Mammary epithelial cell (primary cell): ENCODE measurements at regions of chr22 and their contacts with region 1.

Region 1: GRCh38 chr22:30169002-30169401 is 77.6 kb downstream of the LIF start:
- DNase-seq: no peak
- H3K4me3 ChIP-seq: no peak overlapping the region
- H3K27ac ChIP-seq: no peak overlapping the region
- H3K4me1 ChIP-seq: no peaks in the 10 kb centered on the region
- H3K27me3 ChIP-seq: no peaks in the 10 kb centered on the region
- CTCF ChIP-seq: no peak

Region 2: DNA sequence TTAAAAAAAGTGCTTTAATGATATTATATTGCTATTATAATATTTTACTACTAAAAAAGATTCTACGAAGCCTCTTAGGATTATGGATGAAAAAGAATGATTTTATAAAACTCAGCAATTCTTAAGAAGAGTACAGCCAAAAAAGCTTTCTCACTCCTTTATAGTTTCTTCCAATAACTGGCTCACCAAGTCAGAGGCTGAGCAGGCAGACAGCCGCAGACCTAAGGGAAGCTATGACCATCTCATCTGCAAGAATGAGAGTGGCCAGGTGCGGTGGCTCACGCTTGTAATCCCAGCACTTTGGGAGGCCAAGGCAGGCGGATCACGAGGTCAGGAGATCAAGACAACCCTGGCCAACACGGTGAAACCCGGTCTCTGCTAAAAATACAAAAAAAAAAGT is 976.0 kb before region 1 on chr22:
- CTCF ChIA-PET with region 1: interaction called, 15 read pairs
- dilution Hi-C with region 1: no loop called
- in situ Hi-C with region 1: no loop called
- intact Hi-C with region 1: no loop called
- DNase-seq: no peak
- H3K4me3 ChIP-seq: no peak overlapping the region
- H3K27ac ChIP-seq: no peak overlapping the region
- H3K4me1 ChIP-seq: no peaks in the 10 kb centered on the region
- H3K27me3 ChIP-seq: no peaks in the 10 kb centered on the region
- CTCF ChIP-seq: no peak

Region 3: GRCh38 chr22:29979777-29980321 is 189.2 kb before region 1 on chr22:
- CTCF ChIA-PET with region 1: no interaction called
- dilution Hi-C with region 1: no loop called
- in situ Hi-C with region 1: no loop called
- intact Hi-C with region 1: no loop called
- DNase-seq: no peak
- H3K4me3 ChIP-seq: no peak overlapping the region
- H3K27ac ChIP-seq: no peak overlapping the region
- H3K4me1 ChIP-seq: peaks cover 11% of the 10 kb centered on the region
- H3K27me3 ChIP-seq: no peaks in the 10 kb centered on the region
- CTCF ChIP-seq: no peak

Region 4: GRCh38 chr22:30127749-30128166 is 41.2 kb before region 1 on chr22:
- CTCF ChIA-PET with region 1: no interaction called
- dilution Hi-C with region 1: no loop called
- in situ Hi-C with region 1: no loop called
- intact Hi-C with region 1: no loop called
- DNase-seq: no peak
- H3K4me3 ChIP-seq: no peak overlapping the region
- H3K27ac ChIP-seq: no peak overlapping the region
- H3K4me1 ChIP-seq: no peaks in the 10 kb centered on the region
- H3K27me3 ChIP-seq: no peaks in the 10 kb centered on the region
- CTCF ChIP-seq: no peak

Region 5: DNA sequence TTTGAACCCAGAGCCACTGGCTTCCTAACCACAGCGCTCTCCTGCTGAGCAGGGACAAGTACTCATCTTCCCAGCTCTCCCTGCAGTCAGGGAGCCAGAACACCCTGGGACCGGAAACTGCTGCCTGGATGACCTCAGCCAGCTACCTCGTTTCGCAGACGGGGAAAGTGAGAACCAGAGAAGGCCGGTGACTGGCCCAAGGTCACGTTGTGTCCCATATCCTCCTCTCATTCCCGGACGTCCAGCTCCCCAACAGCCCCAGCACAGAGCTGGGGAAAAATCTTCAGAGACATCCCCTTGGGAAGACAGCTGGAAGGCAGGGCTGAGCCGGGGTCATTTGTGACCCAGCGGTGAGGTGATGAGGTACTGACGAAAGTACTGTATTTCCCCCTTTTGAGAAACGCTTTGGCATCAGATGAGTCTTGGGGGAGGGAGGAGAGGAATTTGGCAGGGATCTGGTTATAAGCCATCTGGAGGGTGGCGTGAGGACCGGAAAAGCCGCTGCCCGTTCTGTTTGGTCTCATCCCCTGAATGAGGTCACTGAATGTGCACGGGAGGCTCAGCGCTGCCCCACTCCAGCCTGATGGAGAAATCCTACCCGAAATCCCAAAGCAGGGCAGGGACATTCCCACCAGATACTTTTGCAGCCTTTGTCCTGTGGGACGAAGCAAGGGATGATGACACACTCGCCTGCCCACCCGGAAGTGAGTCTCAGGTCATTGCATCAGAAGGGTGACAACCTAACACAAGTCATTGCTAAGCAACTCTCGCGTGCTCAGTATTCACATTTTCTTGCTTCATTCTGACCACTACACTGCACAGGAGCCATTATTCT is 36.5 kb after region 1 on chr22:
- CTCF ChIA-PET with region 1: no interaction called
- dilution Hi-C with region 1: loop called (anchors 5 kb)
- in situ Hi-C with region 1: no loop called
- intact Hi-C with region 1: no loop called
- DNase-seq: peak; percentile 99
- H3K4me3 ChIP-seq: no peak overlapping the region
- H3K27ac ChIP-seq: peak overlapping the region; percentile 97
- H3K4me1 ChIP-seq: peaks cover 60% of the 10 kb centered on the region
- H3K27me3 ChIP-seq: no peaks in the 10 kb centered on the region
- CTCF ChIP-seq: no peak

Region 6: DNA sequence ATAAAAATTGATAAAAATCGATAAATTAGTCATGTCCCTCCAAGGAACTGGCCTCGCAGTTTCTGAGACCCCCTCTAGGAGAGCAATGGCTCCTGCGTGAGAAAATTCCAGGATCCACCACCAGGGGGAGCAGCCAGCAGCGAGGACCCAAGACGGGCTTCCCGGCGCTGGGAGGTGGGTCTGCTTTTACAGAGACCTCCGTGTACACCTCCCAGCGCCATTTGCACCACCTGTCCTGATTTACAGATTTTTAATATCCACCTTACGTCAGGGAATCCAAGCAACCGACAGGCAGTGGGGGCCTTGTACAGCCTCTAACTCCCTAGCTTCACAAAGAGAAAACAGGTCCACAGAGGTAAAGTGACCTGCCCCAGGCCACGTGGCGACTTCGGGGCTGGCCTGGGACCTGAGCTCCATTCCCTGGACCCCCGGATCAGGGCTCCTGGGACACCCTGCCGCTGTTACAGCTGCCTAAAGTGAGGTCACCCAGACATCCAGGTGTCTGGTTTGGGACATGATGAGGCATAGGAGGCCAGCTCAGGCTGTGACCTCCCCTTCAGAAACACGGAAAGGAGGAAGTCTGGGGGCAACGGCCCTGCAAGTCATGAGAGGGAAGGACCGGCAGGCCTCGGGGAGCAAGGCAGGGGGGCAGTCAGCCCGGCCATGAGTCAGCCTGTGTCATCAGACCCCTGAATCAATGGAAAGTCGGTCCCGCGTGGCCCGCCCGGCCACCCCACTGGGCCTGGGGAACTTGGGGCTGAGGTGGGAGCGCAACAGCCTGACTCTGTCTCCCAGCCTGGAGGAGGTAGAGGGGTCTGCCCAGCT is 94.1 kb after region 1 on chr22:
- CTCF ChIA-PET with region 1: no interaction called
- dilution Hi-C with region 1: loop called (anchors 5 kb)
- in situ Hi-C with region 1: no loop called
- intact Hi-C with region 1: no loop called
- DNase-seq: no peak
- H3K4me3 ChIP-seq: no peak overlapping the region
- H3K27ac ChIP-seq: peak overlapping the region; percentile 62
- H3K4me1 ChIP-seq: peaks cover 15% of the 10 kb centered on the region
- H3K27me3 ChIP-seq: no peaks in the 10 kb centered on the region
- CTCF ChIP-seq: peak; percentile 90 to 96

Region 7: DNA sequence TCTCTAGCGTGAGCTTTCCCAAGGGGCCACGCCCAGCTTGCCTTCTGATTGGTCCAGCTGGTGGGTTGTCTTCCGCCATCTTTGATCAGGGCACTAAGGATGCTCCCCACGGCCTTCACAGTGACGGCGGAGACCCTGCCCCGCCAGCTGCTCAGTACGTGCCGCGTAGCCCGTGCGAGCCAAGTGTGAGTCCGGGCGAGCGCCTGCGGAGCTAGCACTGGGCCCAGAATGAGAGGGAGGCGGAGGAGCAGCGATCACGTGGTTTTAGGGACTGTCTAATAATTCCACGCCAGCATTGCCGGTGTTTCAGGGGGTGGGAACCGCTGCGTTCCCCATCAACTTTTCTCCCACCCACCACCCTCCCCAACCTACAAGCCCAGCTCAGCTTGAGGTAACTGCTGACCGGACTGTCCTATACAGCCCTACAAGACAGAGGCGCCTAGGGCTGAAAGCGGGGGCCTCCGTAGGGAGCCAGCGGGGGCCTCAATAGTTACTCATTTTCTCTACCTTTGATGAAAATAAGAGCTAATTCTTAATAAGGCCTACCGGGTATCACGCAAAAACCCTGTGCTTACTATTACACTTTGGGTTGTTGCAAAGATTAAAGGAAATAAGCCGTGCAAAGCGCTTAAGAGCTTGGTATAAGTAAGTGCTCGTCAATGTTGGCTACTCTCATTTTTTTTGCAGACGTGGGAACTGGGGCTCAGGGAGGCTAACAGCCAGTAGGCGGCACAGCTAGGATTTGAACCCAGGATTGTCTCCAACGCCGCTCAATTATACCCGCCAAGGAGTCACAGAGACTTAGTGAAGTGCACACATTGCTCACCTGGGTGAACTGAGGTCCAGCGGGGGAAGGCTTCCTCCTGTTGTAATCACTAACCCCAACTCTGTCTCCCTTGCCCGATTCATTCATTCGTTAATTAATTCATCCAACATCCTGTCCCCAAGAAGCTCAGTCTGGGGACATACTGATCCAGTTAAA is 255.3 kb after region 1 on chr22:
- CTCF ChIA-PET with region 1: no interaction called
- dilution Hi-C with region 1: no loop called
- in situ Hi-C with region 1: no loop called
- intact Hi-C with region 1: no loop called
- DNase-seq: peak; percentile 98
- H3K4me3 ChIP-seq: peak overlapping the region in 2 of 3 experiments; percentile 26 to 37
- H3K27ac ChIP-seq: peak overlapping the region; percentile 94
- H3K4me1 ChIP-seq: peaks cover 76% of the 10 kb centered on the region
- H3K27me3 ChIP-seq: no peaks in the 10 kb centered on the region
- CTCF ChIP-seq: no peak